ENCODE measurements at regions of chr20 and their contacts with region 1.

Region 1: GRCh38 chr20:16761305-16761829 is 13.2 kb downstream of the OTOR start:
- DNase-seq: peak; percentile 38
- CTCF ChIP-seq: peak; percentile 71

Region 2: GRCh38 chr20:15708984-15709598 is 1052.3 kb before region 1 on chr20:
- in situ Hi-C with region 1: loop called (anchors 25 kb)
- DNase-seq: peak; percentile 62
- CTCF ChIP-seq: peak; percentile 71

Region 3: DNA sequence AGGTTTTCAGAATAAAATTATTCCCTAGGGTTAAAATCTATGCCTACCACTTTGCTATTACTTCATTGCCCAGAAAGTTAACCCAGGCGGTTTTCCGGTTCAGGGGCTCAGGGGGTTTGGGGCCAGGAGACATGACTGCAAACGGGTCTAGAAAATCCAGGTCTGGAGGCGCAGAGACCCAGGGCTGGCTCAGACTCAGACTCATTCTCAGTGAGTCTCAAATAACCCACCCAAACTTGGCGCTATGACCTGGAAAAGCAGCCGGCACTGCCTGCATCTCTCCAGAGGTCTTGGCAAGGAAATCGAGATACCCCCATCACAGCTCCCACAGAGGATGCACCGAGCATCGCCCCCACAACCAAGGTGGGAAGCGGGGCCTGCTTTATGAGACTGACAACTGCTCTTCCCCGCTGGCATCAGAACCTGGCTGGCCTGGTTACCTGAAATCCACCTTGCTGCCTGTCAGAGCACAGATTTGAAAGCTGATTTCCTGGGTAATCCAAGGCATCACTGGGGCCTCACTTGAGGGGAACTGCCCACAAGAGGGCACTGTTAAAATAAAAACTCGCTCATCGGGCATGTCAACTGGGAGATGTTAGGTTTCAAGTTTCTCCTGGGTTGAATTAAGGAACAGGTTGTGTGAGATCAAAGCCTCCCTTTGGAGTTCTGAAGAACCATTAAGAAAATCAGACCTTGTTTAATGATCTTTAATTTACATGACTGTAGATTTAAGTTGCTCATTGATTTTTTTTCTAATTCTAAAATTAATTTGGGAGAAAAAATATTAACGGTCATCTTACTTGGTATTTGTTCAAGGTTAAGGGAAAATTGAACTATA is 243.2 kb before region 1 on chr20:
- in situ Hi-C with region 1: loop called (anchors 25 kb)
- DNase-seq: peak; percentile 56
- CTCF ChIP-seq: peak; percentile 32

Region 4: GRCh38 chr20:17044901-17045300 is 283.5 kb after region 1 on chr20:
- in situ Hi-C with region 1: no loop called
- DNase-seq: no peak
- CTCF ChIP-seq: no peak

Region 5: GRCh38 chr20:17137692-17138091 is 376.3 kb after region 1 on chr20:
- in situ Hi-C with region 1: no loop called
- DNase-seq: no peak
- CTCF ChIP-seq: no peak